ENCODE measurements at regions of chr1 and their contacts with region 1.

Region 1: GRCh38 chr1:198201956-198202784 is 45.4 kb downstream of the NEK7 start:
- DNase-seq: peak; percentile 73
- H3K4me3 Mint-ChIP-seq: peak overlapping the region; percentile 68
- H3K27ac Mint-ChIP-seq: peak overlapping the region; percentile 86
- H3K4me1 Mint-ChIP-seq: peaks cover 49% of the 10 kb centered on the region
- H3K27me3 Mint-ChIP-seq: no peaks in the 10 kb centered on the region

Region 2: DNA sequence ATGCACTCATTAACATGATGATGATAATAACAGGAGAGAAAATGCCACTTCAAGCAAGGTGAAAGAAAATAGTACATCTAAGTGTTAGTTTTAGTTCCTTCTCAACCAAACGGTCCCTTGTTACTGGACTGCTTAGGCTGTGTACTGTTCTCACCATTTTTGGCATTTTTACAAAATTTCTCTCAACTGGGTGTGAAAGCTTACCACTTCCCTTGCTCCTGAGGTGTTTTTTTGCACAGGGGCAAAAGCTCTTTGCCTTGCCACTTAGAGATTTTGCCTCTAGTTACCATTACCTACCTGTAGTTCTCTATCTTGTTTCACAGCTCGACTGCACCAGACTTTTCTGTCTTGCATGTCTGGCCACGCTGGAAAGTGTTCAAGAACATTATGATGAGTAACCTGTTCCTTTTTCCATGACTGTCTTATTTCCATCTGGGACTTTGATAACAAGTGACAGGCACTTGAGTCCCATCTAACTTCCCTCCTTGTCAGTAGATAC is 34.7 kb before region 1 on chr1:
- intact Hi-C with region 1: loop called (anchors 1 kb)
- DNase-seq: peak; percentile 74
- H3K4me3 Mint-ChIP-seq: peak overlapping the region; percentile 73
- H3K27ac Mint-ChIP-seq: peak overlapping the region; percentile 94
- H3K4me1 Mint-ChIP-seq: peaks cover 65% of the 10 kb centered on the region
- H3K27me3 Mint-ChIP-seq: no peaks in the 10 kb centered on the region

Region 3: GRCh38 chr1:198185759-198186158 is 16.4 kb before region 1 on chr1:
- intact Hi-C with region 1: loop called (anchors 1 kb)
- DNase-seq: no peak
- H3K4me3 Mint-ChIP-seq: peak overlapping the region; percentile 66
- H3K27ac Mint-ChIP-seq: peak overlapping the region; percentile 58
- H3K4me1 Mint-ChIP-seq: peaks cover 48% of the 10 kb centered on the region
- H3K27me3 Mint-ChIP-seq: no peaks in the 10 kb centered on the region

Region 4: GRCh38 chr1:198234520-198235251 is 32.5 kb after region 1 on chr1:
- intact Hi-C with region 1: loop called (anchors 2 kb)
- DNase-seq: no peak
- H3K4me3 Mint-ChIP-seq: peak overlapping the region; percentile 49
- H3K27ac Mint-ChIP-seq: peak overlapping the region; percentile 73
- H3K4me1 Mint-ChIP-seq: peaks cover 14% of the 10 kb centered on the region
- H3K27me3 Mint-ChIP-seq: no peaks in the 10 kb centered on the region

Region 5: DNA sequence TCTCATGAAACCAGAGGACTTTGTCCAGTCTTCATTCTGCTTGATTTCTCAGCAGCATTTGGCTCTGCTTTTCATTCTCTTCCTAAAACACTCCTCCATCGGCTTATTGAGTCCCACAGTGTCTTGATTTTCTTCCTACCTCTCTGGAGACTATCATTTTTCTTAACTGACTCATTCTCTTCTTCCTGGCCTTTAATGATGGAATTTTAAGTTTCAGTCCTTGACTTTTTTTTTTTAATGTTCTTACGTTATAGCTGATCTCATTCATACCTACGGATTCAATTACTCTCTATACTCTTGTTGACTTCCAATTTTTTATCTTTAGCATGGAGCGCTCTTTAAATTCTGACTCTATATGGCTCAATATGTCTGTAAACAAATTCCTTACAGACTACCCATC is 65.8 kb after region 1 on chr1:
- intact Hi-C with region 1: no loop called
- DNase-seq: no peak
- H3K4me3 Mint-ChIP-seq: no peak overlapping the region
- H3K27ac Mint-ChIP-seq: no peak overlapping the region
- H3K4me1 Mint-ChIP-seq: peaks cover 9% of the 10 kb centered on the region
- H3K27me3 Mint-ChIP-seq: no peaks in the 10 kb centered on the region